ENCODE measurements at regions of chr12 and their contacts with region 1.

Region 1: GRCh38 chr12:57261428-57261865 is 10.5 kb upstream of the STAC3 start:
- DNase-seq: no peak
- H3K4me3 Mint-ChIP-seq: no peak overlapping the region
- H3K27ac Mint-ChIP-seq: no peak overlapping the region
- H3K4me1 Mint-ChIP-seq: no peaks in the 10 kb centered on the region
- H3K27me3 Mint-ChIP-seq: no peaks in the 10 kb centered on the region
- CTCF ChIP-seq: no peak

Region 2: GRCh38 chr12:56431850-56432249 is 829.6 kb before region 1 on chr12:
- CTCF ChIA-PET with region 1: no interaction called
- POLR2A ChIA-PET with region 1: no interaction called
- intact Hi-C with region 1: no loop called
- DNase-seq: peak; percentile 15
- H3K4me3 Mint-ChIP-seq: no peak overlapping the region
- H3K27ac Mint-ChIP-seq: no peak overlapping the region
- H3K4me1 Mint-ChIP-seq: no peaks in the 10 kb centered on the region
- H3K27me3 Mint-ChIP-seq: no peaks in the 10 kb centered on the region
- CTCF ChIP-seq: no peak

Region 3: GRCh38 chr12:56541631-56542030 is 719.8 kb before region 1 on chr12:
- CTCF ChIA-PET with region 1: no interaction called
- POLR2A ChIA-PET with region 1: no interaction called
- intact Hi-C with region 1: no loop called
- DNase-seq: no peak
- H3K4me3 Mint-ChIP-seq: no peak overlapping the region
- H3K27ac Mint-ChIP-seq: no peak overlapping the region
- H3K4me1 Mint-ChIP-seq: peaks cover 11% of the 10 kb centered on the region
- H3K27me3 Mint-ChIP-seq: no peaks in the 10 kb centered on the region
- CTCF ChIP-seq: no peak

Region 4: GRCh38 chr12:57248934-57249742 is 12.3 kb before region 1 on chr12:
- CTCF ChIA-PET with region 1: interaction called, 12 read pairs
- POLR2A ChIA-PET with region 1: interaction called, 4 read pairs
- intact Hi-C with region 1: no loop called
- DNase-seq: no peak
- H3K4me3 Mint-ChIP-seq: no peak overlapping the region
- H3K27ac Mint-ChIP-seq: no peak overlapping the region
- H3K4me1 Mint-ChIP-seq: peaks cover 8% of the 10 kb centered on the region
- H3K27me3 Mint-ChIP-seq: no peaks in the 10 kb centered on the region
- CTCF ChIP-seq: no peak

Region 5: DNA sequence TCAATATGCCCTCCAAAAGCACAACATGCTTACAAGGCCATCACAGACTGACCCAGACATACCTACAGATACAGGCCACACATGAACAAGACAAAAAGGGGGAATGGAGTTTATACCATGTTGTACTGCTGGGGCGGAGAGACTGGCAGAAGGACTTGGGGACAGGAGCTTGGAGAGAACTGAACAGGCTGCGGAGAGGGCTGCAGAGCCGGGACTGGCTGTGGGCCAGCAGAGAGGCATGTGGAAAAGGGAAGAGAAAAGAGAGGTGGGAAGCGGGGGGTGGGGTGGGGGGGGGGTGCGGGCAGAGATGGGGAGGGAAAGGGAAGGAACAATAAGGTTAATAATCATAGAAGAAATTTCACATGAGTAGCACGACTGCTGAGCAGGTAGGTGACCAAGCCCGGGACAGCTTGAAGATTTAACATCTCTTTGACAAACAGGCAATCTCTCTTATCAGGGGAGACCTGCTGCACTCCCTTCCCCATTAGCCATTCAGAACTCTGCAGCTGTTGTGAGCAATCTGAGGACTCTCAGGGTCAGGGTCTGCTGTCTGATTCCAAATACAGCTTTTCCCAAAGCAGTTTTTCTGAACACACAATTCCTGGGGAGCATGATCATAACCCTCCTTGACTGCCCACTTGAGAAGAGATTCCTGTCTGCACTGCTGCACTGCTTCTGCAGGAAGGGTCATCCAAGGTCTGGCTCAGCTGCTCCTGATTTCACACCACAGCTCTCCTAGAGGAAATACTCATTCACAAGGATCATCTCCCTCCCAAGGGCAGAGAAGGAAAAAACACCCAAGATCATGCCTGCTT is 11.1 kb after region 1 on chr12:
- CTCF ChIA-PET with region 1: interaction called, 14 read pairs
- POLR2A ChIA-PET with region 1: no interaction called
- intact Hi-C with region 1: no loop called
- DNase-seq: no peak
- H3K4me3 Mint-ChIP-seq: no peak overlapping the region
- H3K27ac Mint-ChIP-seq: no peak overlapping the region
- H3K4me1 Mint-ChIP-seq: no peaks in the 10 kb centered on the region
- H3K27me3 Mint-ChIP-seq: no peaks in the 10 kb centered on the region
- CTCF ChIP-seq: no peak

Region 6: GRCh38 chr12:57309420-57309819 is 48.0 kb after region 1 on chr12:
- CTCF ChIA-PET with region 1: interaction called, 4 read pairs
- POLR2A ChIA-PET with region 1: no interaction called
- intact Hi-C with region 1: loop called (anchors 5 kb)
- DNase-seq: no peak
- H3K4me3 Mint-ChIP-seq: no peak overlapping the region
- H3K27ac Mint-ChIP-seq: peak overlapping the region; percentile 66
- H3K4me1 Mint-ChIP-seq: peaks cover 13% of the 10 kb centered on the region
- H3K27me3 Mint-ChIP-seq: no peaks in the 10 kb centered on the region
- CTCF ChIP-seq: no peak

Region 7: GRCh38 chr12:57868851-57869268 is 607.4 kb after region 1 on chr12:
- CTCF ChIA-PET with region 1: no interaction called
- POLR2A ChIA-PET with region 1: no interaction called
- intact Hi-C with region 1: no loop called
- DNase-seq: no peak
- H3K4me3 Mint-ChIP-seq: no peak overlapping the region
- H3K27ac Mint-ChIP-seq: peak overlapping the region; percentile 10
- H3K4me1 Mint-ChIP-seq: peaks cover 11% of the 10 kb centered on the region
- H3K27me3 Mint-ChIP-seq: no peaks in the 10 kb centered on the region
- CTCF ChIP-seq: no peak

Measured in MCF 10A (cell line).